ENCODE measurements at regions of chr2 and their contacts with region 1.

Region 1: DNA sequence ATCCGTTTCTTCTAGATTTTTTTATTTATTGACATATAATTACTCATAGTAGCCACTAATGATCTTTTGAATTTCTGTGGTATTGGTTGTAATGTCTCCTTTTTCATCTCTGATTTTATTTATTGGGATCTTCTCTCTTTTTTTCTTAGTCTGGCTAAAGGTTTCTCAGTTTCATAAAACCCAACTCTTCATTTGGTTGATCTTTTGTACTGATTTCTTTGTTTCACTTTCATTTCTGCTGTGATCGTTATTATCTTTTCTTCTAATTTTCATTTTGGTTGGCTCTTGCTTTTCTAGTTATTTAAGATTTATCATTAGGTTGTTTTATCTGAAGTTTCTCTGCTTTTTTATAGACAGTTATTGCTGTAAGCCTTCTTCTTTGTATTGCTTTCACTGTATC is 463.6 kb upstream of the CRIM1 start:
- DNase-seq: no peak
- ATAC-seq: no peak
- H3K4me3 ChIP-seq: no peak overlapping the region
- H3K27ac ChIP-seq: no peak overlapping the region
- H3K4me1 ChIP-seq: no peaks in the 10 kb centered on the region
- H3K27me3 ChIP-seq: no peaks in the 10 kb centered on the region
- CTCF ChIP-seq: no peak

Region 2: DNA sequence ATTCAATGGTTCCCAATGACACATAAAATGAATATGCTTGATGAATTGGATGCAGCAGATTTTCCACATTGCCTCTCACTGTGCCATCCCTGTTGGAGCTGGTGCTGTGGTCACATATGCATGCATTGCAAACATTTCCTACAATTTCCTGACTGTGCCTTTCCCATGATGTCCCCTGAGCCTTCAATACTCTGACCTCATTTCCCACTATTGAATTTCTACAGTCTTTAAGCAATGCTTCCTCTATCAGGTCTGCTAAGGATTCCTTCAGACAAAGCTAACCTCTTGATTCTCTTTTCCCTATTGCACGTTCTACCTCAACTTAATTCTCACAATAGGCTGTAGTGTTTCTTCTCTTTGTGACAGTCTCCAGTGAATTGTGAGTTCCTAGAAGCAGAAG is 121.1 kb after region 1 on chr2:
- CTCF ChIA-PET with region 1: no interaction called
- POLR2A ChIA-PET with region 1: interaction called, 10 read pairs
- in situ Hi-C with region 1: no loop called
- intact Hi-C with region 1: no loop called
- DNase-seq: no peak
- ATAC-seq: no peak
- H3K4me3 ChIP-seq: no peak overlapping the region
- H3K27ac ChIP-seq: no peak overlapping the region
- H3K4me1 ChIP-seq: no peaks in the 10 kb centered on the region
- H3K27me3 ChIP-seq: peaks cover 3% of the 10 kb centered on the region; the same call in 1 of the 2 replicates
- CTCF ChIP-seq: no peak

Measured in Panc1 (cell line).